ENCODE measurements at regions of chr11 and their contacts with region 1.

Region 1: DNA sequence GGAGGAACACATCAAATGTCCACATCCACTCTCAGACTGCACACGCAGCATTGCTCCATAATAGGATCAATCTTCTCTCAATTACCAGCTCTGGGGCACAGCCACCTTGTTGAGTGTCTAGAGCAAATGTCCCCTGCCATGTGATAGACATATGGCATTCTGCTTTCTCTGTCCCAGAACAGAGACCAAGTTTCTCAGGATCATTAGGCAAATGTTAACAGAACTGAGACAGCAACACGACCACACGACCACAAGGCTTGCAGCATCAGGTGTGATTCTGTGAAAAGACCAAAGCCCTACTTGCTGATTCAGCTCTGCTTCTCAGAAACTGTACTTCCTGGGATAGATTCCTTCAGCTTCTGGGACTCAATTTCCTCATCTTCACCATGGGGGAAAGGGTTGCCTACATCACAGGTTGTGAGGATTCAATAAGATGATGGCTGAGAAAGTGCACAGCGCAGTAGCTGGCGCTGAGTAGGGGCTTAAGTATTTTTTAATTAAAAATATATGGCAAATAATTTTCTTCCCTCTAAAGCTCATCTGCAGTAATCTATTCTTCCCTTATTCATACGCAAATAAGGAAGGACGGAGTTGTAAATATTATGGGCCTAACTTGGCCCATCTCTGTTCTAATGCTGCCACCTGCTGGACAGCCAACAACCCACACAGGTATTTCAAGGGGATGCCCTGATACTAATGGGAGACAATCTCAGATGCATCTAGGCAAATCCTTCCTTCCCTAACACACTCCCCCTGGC is 54.3 kb upstream of the USP47 start:
- DNase-seq: no peak
- H3K4me3 ChIP-seq: no peak overlapping the region
- CTCF ChIP-seq: peak; percentile 64

Region 2: DNA sequence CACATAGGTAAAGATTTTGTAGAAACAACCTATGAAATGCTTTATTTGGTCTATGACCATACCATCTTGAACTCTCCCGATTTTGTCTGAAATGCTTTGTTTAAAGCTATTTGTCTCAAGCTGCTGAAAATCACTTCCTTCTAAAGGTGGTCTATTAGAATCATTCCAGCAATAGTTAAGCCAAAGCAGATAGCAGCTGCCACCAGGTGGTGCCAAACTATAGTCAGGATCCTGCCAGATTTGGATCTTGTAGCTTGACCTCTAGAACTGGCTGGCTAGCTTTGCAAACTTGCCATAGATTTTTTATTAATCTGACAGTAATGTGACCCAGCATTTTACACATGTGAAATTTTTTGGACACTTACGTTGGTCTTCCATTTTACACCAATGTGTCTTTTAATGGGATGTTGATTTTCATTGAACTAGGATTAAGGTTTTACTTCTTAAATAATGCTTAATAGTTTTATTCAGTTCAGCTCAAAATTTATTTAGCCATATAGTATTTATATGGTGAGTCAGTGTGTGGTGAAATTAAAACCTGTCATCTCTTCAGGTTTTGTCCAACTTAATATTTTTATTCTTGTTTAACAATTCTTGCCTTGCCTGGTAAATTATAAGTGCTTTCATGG is 1016.7 kb before region 1 on chr11:
- CTCF ChIA-PET with region 1: interaction called, 53 read pairs
- POLR2A ChIA-PET with region 1: no interaction called
- DNase-seq: no peak
- H3K4me3 ChIP-seq: no peak overlapping the region
- CTCF ChIP-seq: peak; percentile 70

Region 3: DNA sequence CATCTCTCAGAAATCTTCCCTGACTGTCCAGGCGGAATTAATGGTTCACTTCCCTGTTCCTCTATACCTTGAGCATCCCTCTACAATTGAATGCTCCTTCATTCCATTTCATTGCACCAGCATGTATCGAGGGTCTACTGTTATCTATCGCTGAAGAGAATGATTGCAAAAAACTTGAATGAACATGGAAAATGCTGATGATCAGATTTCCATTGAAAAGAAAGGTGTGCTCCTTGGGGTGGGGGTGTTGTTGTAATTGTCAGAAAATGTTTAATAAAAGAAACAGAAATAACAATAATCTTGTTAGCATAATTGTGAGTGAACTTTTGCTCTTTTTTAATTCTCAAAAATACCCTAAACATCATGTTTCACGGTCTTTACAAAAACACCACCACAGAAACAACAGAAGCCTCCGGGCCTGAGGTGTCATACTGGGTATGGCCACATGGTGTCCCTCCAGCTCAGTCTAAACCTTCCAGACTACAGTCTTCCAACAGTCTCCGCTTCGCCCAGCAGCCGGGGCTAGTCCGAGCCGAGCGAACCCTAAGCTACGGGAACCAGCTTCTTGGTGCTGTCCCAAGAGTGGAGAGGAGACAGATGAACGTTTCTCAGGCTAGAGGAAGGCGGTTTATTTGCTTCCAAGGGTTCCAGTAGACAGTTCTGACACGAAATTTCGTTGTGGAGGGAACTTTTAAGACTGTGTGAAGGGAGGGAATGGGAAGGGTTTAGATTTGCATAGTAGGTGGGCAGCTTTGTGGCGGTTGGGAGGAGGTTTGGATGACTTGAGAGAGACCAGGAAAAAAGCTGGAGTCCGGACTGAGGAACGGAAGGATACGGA is 853.8 kb before region 1 on chr11:
- CTCF ChIA-PET with region 1: interaction called, 52 read pairs
- POLR2A ChIA-PET with region 1: no interaction called
- DNase-seq: peak; percentile 73
- H3K4me3 ChIP-seq: peak overlapping the region; percentile 58
- CTCF ChIP-seq: peak; percentile 90

Region 4: GRCh38 chr11:11028017-11028692 is 759.3 kb before region 1 on chr11:
- CTCF ChIA-PET with region 1: interaction called, 189 read pairs
- POLR2A ChIA-PET with region 1: no interaction called
- DNase-seq: no peak
- H3K4me3 ChIP-seq: no peak overlapping the region
- CTCF ChIP-seq: peak; percentile 68

Region 5: GRCh38 chr11:11770296-11770695 is 17.2 kb before region 1 on chr11:
- CTCF ChIA-PET with region 1: interaction called, 62 read pairs
- POLR2A ChIA-PET with region 1: no interaction called
- DNase-seq: no peak
- H3K4me3 ChIP-seq: no peak overlapping the region
- CTCF ChIP-seq: no peak

Region 6: GRCh38 chr11:12281571-12282478 is 494.3 kb after region 1 on chr11:
- CTCF ChIA-PET with region 1: interaction called, 20 read pairs
- POLR2A ChIA-PET with region 1: no interaction called
- DNase-seq: no peak
- H3K4me3 ChIP-seq: no peak overlapping the region
- CTCF ChIP-seq: peak; percentile 84